Posterior cingulate gyrus (tissue), 11 donors: ENCODE measurements at regions of chr7 and their contacts with region 1.

Region 1: GRCh38 chr7:131107337-131108211 is 220.1 kb upstream of the MKLN1 start:
- DNase-seq: peak; percentile 41 to 93 (median 77)

Region 2: DNA sequence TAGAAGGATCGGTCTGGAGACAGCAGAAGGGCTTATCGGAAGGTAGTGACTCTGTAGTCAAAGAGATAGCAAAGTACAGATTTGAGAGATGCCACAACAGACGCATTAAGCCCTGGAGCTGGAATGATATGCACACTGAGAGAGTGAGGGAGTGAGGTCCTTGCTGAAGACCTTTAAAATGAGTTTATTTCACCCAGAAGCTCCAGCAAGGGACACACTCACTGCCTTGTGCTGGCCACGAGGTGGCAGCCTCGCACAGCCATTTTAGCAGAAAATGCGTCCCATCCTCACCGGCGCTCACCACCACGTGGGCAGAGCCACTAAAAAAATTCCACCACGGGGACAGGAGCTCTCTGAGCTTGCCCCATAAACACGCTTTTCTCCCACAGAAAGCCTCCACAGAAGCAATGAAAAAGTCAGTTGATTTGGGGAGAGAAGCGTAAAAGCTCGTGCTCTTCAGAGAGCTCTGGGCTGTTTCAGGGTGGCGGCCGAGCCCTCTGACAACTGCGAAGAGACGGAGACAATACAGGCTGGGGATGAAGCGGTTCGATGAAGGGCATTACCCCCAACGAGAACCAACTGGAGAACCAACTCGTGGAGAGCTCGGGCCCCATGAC is 210.6 kb before region 1 on chr7:
- intact Hi-C with region 1: loop called (anchors 10 kb)
- DNase-seq: peak; percentile 73 to 98 (median 80)

Region 3: GRCh38 chr7:131068604-131069021 is 39.0 kb before region 1 on chr7:
- intact Hi-C with region 1: loop called (anchors 5 kb)
- DNase-seq: no peak

Region 4: DNA sequence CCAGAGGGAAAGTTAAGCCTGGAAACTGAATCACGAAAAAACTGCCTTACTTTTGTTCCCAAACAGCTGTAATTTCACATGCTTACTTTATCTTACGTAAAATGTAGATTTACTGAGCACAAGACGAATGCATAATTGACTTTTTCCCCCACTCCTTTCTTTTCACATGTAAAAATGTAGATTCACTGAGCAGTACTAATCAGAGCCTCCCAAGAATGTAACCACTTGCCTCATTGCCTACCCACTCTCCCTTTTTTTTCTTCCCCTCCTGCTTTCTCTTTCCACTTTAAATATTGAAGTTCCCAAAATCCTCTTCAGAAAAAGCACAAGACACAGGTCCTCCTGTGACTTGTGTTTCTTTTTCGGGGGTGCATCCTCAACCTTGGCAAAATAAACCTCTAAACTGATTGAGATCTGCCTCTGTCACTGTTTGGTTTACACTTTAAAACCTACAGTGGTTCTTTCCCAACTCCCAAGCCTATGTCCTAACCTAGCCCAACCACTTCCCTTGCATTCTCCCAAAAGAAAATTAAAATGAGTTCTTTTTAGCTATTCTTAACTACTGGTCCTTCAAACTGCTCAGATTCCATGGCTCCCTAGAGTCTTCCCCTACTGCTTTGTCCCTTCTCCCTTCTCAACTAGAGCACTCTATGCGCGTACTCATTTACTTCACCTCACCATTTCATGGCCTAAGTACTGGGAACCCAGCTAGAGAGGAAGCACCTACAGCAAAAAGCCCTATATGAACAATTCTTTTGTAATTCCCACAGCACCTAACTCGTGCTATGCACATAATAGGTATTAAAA is 16.5 kb before region 1 on chr7:
- intact Hi-C with region 1: no loop called
- DNase-seq: no peak

Region 5: DNA sequence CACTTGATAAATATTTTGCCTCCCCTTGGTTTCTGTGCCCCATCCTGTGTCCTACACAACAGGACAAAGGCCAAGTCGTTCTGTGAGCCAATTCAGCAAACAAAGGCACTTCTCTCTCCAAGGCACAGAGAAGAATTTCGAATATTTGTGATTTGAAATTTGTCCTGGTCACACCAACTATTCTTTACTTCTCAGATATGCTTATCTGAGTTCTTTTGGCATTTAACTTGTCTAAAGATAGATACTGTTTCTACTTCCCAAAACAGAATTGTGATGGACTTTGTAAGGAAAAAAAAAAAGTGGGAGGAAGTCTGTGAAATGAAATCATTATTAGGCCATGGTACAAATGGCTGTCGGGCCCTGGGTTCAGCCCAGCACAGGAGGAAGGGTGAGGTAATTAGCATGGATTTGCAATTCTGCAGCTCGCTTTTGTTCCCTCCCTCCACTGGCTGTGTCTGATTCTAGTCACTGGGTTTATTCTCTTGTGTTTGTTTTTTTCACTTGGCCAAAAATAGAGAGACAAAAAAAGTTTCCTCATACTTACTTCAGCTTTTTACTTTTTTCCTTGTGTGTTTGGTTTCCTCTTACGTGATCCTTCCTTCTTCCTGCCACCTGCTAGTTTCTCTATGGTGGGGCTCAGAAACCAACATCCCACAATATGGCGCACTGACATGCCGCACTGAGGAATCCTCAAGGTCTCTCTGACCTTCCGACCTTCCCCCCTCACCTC is 111.9 kb after region 1 on chr7:
- intact Hi-C with region 1: loop called (anchors 10 kb)
- DNase-seq: peak; percentile 38 to 90 (median 60)

Region 6: DNA sequence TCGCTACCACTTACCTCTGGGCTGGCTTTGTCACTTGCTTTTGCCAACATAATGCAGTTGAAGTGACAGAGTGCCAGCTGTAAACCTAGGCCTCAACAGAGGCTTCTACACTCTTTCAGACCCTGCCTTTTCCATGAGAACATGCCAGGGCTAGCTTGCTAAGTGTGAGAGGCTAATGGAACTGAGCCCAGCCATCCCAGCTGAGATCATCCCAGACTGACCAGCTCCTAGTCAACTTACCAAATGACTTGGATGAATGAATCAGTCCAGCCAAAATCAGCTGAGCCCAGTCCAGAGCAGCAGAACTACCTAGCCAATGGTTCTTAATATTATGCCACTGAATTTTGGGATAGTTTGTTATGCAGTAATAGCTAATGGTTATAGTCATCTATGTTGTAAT is 185.4 kb after region 1 on chr7:
- intact Hi-C with region 1: no loop called
- DNase-seq: no peak

Region 7: DNA sequence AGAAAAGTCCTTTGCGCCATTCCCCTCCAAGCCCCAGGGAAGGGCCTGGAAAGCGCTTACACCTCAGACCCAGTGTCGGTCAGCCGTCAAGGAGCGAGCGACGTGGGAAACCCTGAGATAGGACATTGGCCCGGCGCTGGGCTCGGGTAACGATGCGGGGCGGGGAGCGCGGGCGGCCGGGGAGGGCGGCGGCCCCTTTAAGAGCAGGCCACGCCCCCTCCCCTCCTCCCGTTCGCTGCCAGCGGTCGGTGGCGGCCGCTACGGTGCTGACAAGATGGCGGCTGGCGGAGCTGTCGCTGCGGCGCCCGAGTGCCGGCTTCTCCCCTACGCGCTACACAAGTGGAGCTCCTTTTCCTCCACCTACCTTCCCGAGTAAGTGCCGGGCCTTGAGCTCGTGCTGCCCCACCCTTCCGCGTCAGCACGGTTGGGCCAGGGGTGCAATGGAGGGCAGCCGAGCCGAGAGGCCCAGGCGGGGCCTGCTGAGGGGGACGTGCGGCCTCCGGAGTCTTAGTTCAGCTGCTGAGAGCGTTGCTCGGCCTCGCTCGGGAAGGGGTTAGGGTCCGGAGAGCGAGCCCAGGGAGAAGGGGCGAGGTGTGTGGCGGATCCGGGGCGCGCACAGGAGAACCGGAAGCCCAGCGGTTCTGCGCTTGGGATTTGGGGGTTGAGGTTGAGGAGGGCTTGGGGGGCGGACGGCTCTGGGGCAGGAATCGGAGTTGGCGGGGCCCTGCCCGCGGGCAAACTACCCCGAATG is 220.2 kb after region 1 on chr7 and contains the start of gene MKLN1:
- intact Hi-C with region 1: loop called (anchors 5 kb)
- DNase-seq: peak; percentile 81 to 98 (median 87)

Region 8: DNA sequence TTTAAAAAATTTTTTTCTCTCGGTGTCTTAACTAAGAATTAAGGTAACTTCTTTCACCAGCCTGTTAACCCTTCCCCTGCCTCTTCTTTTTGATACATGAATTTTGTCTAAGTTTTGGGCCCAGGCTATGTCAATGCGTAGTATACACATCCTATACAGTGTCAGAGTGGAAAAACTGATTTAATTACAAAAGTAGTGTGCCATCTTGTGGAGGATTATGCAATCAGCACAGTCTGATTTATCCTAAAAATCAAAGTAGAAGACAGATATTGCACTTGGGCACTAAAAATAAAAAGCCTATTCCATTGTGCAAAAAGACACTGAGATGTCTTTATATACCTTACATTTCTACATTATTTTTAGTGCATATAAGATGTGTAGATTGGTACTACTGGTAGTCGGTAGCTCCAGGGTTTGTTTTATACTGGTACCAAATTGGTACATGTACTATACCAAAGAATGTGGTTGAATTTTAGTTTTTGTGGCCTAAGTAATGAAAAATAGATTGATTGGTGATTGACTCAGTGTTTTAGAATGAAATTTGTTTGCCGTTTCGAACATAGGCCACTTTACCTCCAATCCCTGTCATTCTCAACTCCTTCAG is 316.7 kb after region 1 on chr7:
- intact Hi-C with region 1: loop called (anchors 5 kb)
- DNase-seq: no peak

Region 9: GRCh38 chr7:131556052-131556908 is 448.7 kb after region 1 on chr7 and contains the start of gene PODXL:
- intact Hi-C with region 1: loop called (anchors 5 kb)
- DNase-seq: peak; percentile 34 to 94 (median 48)